ENCODE measurements at regions of chr2 and their contacts with region 1.

Region 1: DNA sequence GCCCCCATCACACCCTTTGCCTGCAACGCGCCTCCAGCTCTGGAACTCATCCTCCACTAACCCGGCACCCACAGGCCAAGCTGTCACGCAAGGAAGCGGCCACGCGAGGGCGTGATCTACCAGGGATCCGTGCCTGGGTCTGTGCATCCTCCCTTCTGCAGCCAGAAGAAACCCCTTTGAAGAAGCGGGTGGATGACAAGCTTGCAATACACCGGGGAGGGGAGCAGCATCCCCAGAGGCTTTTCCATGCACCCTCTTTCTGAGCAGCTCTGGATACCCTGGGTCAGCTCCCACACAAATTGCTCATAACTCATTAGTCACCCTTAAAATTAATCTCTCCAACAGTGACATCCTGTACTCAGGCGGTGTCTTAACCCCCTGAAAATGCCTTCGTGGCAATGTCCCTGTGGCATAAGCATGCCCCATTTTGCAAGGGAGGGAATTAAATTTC is 47.6 kb downstream of the PDCL3 start:
- DNase-seq: peak; percentile 86
- ATAC-seq: peak; percentile 63
- H3K4me3 Mint-ChIP-seq: no peak overlapping the region
- H3K27ac Mint-ChIP-seq: no peak overlapping the region
- H3K4me1 Mint-ChIP-seq: peaks cover 5% of the 10 kb centered on the region
- H3K27me3 Mint-ChIP-seq: no peaks in the 10 kb centered on the region
- CTCF ChIP-seq: peak; percentile 46; the same call in 1 of the 2 replicates

Region 2: DNA sequence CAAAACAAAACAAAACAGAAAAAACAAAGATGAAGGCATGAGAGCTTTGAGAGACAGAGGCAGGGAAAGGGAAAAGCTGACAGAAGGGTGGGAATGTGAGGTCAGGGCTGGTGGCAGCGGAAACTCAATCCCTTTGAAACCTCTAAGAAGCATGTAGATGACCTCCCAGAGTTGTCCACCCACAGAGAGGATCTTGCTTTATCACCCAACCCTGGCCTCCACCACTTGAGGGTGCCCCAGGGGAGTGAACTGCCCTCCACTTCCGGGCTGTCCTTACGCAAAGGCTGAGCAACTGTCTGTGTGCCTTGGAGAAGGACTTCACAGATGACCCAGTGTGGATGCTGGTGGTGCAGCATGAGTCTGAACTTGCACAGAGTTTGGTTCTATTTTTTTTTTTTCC is 20.9 kb before region 1 on chr2:
- CTCF ChIA-PET with region 1: interaction called, 24 read pairs
- POLR2A ChIA-PET with region 1: no interaction called
- DNase-seq: no peak
- ATAC-seq: no peak
- H3K4me3 Mint-ChIP-seq: no peak overlapping the region
- H3K27ac Mint-ChIP-seq: no peak overlapping the region
- H3K4me1 Mint-ChIP-seq: no peaks in the 10 kb centered on the region
- H3K27me3 Mint-ChIP-seq: no peaks in the 10 kb centered on the region
- CTCF ChIP-seq: no peak

Region 3: DNA sequence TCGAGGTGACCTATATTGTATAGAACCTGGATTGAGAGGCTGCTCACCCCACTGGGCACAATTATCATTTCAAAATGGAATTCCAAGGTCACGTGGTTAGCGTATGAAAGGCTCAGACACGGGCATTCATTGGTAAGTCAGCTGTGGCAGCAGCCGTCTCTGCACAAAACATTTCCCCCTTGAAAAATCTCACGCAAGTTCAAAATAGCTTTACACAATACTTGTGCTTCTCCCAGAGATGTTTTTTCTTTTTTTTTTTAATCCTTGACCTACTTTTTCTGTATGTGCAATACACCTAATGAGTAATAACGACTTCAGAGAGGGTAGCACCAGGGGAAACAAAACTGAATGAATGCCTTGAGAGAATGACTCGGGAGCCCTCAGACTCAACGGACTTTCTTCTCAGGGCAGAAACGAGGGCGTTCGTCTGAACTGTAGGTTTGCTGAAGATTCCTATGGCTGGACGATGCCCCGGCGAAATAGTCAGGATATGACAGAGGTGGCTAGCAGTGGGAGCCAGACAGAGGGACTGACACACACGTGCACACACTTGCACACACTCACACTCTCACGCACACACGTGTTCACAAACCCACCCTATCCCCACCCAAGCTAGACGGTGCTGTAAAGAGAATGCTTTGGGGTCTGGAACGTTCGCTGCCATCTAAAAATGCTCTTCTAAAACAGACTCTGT is 30.2 kb after region 1 on chr2:
- CTCF ChIA-PET with region 1: interaction called, 13 read pairs
- POLR2A ChIA-PET with region 1: no interaction called
- DNase-seq: no peak
- ATAC-seq: no peak
- H3K4me3 Mint-ChIP-seq: no peak overlapping the region
- H3K27ac Mint-ChIP-seq: peak overlapping the region; percentile 12; the same call in 1 of the 2 replicates
- H3K4me1 Mint-ChIP-seq: peaks cover 39% of the 10 kb centered on the region
- H3K27me3 Mint-ChIP-seq: no peaks in the 10 kb centered on the region; the same call in 1 of the 2 replicates
- CTCF ChIP-seq: no peak